ENCODE measurements at regions of chr1 and their contacts with region 1.

Region 1: DNA sequence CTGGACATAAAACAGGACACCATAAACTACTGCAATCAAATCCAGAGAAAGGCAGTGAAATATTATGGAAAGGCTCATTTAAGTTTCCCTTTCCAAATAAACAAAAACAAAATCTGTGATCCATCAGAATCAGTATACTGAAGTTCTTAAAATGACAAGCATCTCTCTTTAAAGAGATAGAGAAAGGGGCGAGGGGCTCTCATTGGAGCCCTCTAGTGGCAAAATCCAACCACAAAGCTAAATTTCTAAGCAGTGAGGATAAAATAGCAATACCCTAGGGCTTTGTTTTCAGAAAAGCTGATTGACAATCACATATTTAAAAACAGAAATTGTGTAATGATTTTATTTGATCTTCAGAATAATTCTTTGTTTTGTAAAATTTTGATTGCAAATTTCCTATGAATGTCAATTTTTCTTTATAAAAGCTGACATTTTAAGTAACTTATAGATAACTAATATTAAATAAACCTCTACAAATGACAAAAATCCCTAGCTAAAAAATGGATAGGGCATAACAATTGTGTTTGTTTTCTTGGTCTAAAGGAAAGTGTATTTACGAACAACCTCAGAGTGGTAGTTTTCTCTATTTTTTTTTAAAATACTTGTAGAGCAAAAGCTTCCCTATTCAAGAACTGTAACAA is 138.2 kb downstream of the COL24A1 start:
- DNase-seq: no peak
- ATAC-seq: peak; percentile 64

Region 2: DNA sequence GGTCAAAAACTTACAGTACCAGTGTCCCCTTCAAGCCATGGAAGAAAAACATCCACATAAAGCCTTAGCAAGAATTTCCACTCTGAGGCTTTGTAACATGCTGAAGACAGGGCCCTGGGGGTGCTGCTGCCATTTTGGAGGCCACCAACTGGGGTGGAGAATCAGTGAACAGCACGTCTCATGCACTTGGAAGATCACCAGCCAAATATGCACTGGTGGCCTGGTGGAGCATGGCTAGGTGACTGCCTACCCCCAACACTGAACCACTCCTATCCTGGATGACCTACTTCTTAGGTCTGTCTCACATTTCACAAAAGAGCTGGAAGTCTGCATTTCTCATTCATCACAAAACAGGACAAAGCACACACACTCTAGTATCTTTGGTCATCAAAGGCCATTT is 11.8 kb after region 1 on chr1:
- intact Hi-C with region 1: loop called (anchors 2 kb)
- DNase-seq: no peak
- ATAC-seq: no peak

Region 3: GRCh38 chr1:86068271-86068721 is 49.9 kb after region 1 on chr1:
- intact Hi-C with region 1: no loop called
- DNase-seq: no peak
- ATAC-seq: peak; percentile 22

Measured in sciatic nerve (tissue), 2 donors.